ENCODE measurements at regions of chr2 and their contacts with region 1.

Region 1: DNA sequence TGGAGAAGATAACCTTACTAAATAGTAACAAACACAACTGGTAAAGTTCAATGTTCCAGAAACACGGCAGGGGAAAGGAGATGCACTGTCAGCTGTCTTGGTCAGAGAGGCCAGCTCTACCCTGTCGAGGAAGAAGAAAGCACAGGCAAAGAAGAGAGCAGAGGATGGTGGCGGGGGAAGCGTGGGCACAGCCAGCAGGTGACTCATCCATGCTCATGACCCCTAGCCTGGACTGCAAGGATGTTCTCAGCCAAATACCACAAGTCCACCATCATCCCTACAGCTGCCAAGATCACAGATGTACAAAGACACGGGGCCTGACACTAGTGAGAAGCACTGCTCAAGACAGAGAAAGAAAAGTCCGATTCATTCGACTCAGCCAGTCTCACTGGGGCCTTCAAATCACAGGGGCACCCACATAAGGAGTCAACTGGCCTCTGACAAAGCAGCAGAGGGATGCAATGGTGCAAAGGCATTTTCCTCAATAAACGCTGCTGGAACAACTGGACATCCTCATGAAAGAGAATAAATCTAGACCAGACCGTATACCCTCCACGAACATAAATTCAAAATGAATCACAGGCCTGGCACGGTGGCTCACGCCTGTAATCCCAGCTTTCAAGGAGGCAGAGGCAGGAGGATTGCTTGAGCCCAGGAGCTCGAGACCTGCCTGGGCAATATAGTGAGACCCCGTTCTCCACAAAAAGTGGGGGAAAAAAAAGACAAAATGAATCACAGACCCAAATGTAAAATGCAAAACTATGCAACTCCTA is 5.6 kb downstream of the DTYMK start:
- DNase-seq: no peak
- H3K4me3 ChIP-seq: no peak overlapping the region
- H3K27ac ChIP-seq: peak overlapping the region; percentile 41 to 65 (median 57)
- H3K4me1 ChIP-seq: peaks cover 9 to 23% (median 21%) of the 10 kb centered on the region in 4 donors
- H3K27me3 ChIP-seq: no peaks in the 10 kb centered on the region
- CTCF ChIP-seq: no peak
- EP300 ChIP-seq: no peak
- POLR2A ChIP-seq: no peak

Region 2: GRCh38 chr2:241637000-241637791 is 43.8 kb before region 1 on chr2 and contains the starts of genes ATG4B and THAP4:
- intact Hi-C with region 1: loop called (anchors 5 kb)
- DNase-seq: peak; percentile 95
- H3K4me3 ChIP-seq: peak within 1 kb of the TSS; percentile 89 to 99 (median 94)
- H3K27ac ChIP-seq: peak within 1 kb of the TSS; percentile 96 to 99 (median 98)
- H3K4me1 ChIP-seq: peaks cover 47 to 76% (median 62%) of the 10 kb centered on the region in 4 donors
- H3K27me3 ChIP-seq: no peaks in the 10 kb centered on the region
- CTCF ChIP-seq: no peak
- EP300 ChIP-seq: no peak
- POLR2A ChIP-seq: no peak
- total RNA-seq, gene ATG4B: 39.1 to 76.0 (median 55.3) TPM
- total RNA-seq, gene THAP4: 37.0 to 69.8 (median 49.6) TPM

Region 3: DNA sequence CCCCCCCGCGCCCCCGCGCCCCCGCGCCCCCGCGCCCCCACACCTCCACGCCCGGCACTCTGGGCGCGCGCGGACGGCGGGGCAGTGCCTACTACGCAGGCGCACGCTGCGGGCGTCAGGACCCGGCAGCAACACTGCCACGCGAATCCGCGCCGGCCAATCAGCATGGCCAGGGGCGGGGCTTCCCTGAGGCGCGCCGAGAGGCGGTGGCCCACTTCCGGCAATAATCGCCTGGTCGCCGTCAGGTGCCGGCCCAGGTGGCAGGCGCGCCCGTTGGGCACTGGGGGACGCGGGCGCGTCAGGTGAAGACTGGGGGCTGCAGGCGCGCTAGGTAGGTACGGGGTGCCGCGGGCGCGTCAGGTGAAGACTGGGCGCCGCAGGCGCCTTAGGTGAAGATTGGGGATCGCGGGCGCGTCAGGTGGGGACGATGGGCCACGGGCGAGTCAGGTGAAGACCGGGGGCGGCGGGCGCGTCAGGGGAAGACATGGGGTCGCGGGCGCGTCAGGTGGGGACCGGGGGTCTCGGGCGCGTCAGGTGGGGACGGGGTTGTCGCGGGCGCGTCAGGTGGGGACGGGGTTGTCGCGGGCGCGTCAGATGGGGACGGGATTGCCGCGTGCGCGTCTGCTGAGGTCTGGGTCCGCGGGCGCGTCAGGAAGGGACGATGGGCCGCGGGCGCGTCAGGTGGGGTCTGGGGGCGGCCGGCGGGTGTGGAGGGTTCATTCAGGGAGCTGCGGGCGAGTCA is 407.6 kb after region 1 on chr2:
- intact Hi-C with region 1: no loop called
- DNase-seq: peak; percentile 96
- H3K4me3 ChIP-seq: peak overlapping the region; percentile 68 to 97 (median 86)
- H3K27ac ChIP-seq: peak overlapping the region; percentile 48 to 81 (median 69)
- H3K4me1 ChIP-seq: peaks cover 13 to 21% (median 19%) of the 10 kb centered on the region in 4 donors
- H3K27me3 ChIP-seq: no peaks in the 10 kb centered on the region
- CTCF ChIP-seq: no peak
- EP300 ChIP-seq: no peak
- POLR2A ChIP-seq: peak; percentile 29

Measured in esophagus muscularis mucosa (tissue), 4 donors.